ENCODE measurements at regions of chr6 and their contacts with region 1.

Region 1: GRCh38 chr6:137944793-137945498 is 77.9 kb downstream of the TNFAIP3 start:
- DNase-seq: no peak
- ATAC-seq: peak; percentile 77

Region 2: GRCh38 chr6:137799950-137800568 is 144.9 kb before region 1 on chr6:
- intact Hi-C with region 1: loop called (anchors 5 kb)
- DNase-seq: no peak
- ATAC-seq: peak; percentile 48

Measured in Right ventricle myocardium inferior (tissue), 1 donor.